Thyroid gland (tissue), 4 donors: ENCODE measurements at regions of chr17 and their contacts with region 1.

Region 1: DNA sequence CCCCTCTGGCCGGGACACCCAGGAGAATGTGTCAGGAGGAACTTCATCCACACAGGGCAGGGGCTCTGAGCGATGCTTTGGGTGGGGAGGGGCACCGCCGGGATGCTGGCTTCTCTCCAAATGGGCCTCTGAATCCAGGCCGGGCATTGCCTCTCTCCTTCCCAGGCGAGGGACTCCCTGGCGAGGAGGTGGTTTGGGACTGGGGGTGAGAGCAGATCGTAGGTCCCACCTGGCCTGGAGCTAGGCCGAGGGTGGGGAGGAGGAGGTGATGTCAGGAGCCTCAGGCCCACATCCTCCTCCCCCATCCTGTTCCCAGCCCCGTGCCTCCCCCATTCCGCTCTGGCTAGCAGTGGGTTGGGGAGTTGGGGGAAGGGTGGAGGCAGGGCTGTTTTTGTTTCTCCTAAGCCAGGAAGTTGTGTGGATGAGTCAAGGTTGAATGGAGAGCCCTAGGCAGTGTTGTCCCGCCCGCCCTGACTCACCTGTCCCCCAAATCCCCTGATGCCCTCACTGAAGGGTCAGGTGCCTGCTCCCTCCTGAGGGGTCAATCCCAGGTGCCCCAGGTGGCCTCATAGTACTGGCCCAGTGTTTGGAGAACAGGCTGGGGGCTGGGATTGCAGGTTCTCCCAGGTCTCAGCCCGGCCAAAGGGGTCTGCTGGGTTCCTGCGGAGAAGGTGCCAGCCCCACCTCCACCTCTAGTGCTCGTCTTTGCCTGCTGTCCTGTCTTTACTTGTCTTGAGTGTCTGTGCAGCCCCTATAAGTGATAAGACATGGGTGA is 2.8 kb downstream of the GRB7 start:
- DNase-seq: peak; percentile 27 to 44
- H3K4me3 ChIP-seq: peak overlapping the region in 1 of 3 donors; percentile 49
- H3K27ac ChIP-seq: peak overlapping the region in 1 of 3 donors; percentile 84
- H3K4me1 ChIP-seq: peaks cover 21 to 28% of the 10 kb centered on the region in 2 donors
- H3K27me3 ChIP-seq: no peaks in the 10 kb centered on the region
- CTCF ChIP-seq: no peak
- POLR2A ChIP-seq: no peak

Region 2: GRCh38 chr17:39634384-39634871 is 106.1 kb before region 1 on chr17:
- intact Hi-C with region 1: loop called (anchors 5 kb)
- DNase-seq: no peak
- H3K4me3 ChIP-seq: no peak overlapping the region
- H3K27ac ChIP-seq: no peak overlapping the region
- H3K4me1 ChIP-seq: peaks cover 16 to 28% of the 10 kb centered on the region in 2 donors
- H3K27me3 ChIP-seq: no peaks in the 10 kb centered on the region
- CTCF ChIP-seq: peak in 5 of 6 experiments; percentile 49 to 78 (median 65)
- POLR2A ChIP-seq: no peak

Region 3: DNA sequence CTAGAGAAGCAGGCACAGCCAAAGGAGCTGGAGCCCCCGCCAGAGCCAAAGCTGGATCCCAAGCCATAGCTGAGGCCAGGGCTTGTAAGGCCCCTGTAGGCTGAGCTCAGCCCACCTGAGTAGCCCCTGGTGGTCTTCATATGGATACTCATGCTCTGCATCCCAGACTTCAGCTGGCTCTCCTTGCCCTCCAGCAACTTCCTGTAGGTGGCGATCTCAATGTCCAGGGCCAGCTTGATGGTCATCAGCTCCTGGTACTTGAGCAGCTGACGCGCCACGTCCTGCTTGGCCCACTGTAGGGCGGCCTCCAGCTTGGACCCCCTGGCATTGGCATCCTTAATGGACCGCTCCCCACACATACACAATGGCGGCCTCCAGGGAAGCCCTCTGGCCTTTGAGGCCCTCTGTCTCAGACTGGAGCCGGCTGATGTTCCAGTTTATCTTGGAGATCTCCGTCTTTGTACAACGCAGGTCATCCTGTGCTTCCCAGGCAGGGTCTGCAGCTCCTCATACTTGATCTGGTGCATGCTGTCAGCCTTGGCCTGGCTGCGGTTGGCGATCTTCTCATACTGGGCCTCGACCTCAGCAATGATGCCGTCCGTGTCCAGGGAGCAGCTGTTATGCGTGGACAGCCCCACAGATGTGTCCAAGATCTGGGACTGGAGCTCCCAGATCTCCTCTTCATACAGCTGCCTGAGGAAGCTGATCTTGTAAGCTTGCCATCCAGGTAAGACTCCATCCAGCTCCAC is 94.7 kb after region 1 on chr17:
- intact Hi-C with region 1: no loop called
- DNase-seq: no peak
- H3K4me3 ChIP-seq: no peak overlapping the region
- H3K27ac ChIP-seq: no peak overlapping the region
- H3K4me1 ChIP-seq: no peaks in the 10 kb centered on the region
- H3K27me3 ChIP-seq: no peaks in the 10 kb centered on the region
- CTCF ChIP-seq: no peak
- POLR2A ChIP-seq: no peak